MCF 10A (cell line): ENCODE measurements at regions of chr2 and their contacts with region 1.

Region 1: GRCh38 chr2:231111987-231112386 is 12.9 kb downstream of the HTR2B start:
- DNase-seq: no peak
- H3K4me3 Mint-ChIP-seq: no peak overlapping the region
- H3K27ac Mint-ChIP-seq: no peak overlapping the region
- H3K4me1 Mint-ChIP-seq: peaks cover 14% of the 10 kb centered on the region
- H3K27me3 Mint-ChIP-seq: no peaks in the 10 kb centered on the region
- CTCF ChIP-seq: no peak

Region 2: GRCh38 chr2:231123362-231123898 is 11.4 kb after region 1 on chr2:
- CTCF ChIA-PET with region 1: no interaction called
- POLR2A ChIA-PET with region 1: interaction called, 11 read pairs
- intact Hi-C with region 1: no loop called
- DNase-seq: no peak
- H3K4me3 Mint-ChIP-seq: no peak overlapping the region
- H3K27ac Mint-ChIP-seq: no peak overlapping the region
- H3K4me1 Mint-ChIP-seq: peaks cover 5% of the 10 kb centered on the region
- H3K27me3 Mint-ChIP-seq: no peaks in the 10 kb centered on the region
- CTCF ChIP-seq: no peak